ENCODE measurements at regions of chr12 and their contacts with region 1.

Region 1: GRCh38 chr12:114684098-114684869 is at the start of gene TBX3:
- DNase-seq: peak; percentile 98
- H3K4me3 ChIP-seq: peak within 1 kb of the TSS; percentile 93
- H3K27me3 ChIP-seq: no peaks in the 10 kb centered on the region
- CTCF ChIP-seq: peak; percentile 77
- polyA plus RNA-seq, gene TBX3: 66.4 and 75.7 TPM in 2 replicates

Region 2: GRCh38 chr12:114704096-114704495 is 19.8 kb after region 1 on chr12:
- CTCF ChIA-PET with region 1: interaction called, 5 read pairs
- POLR2A ChIA-PET with region 1: interaction called, 22 read pairs
- DNase-seq: no peak
- H3K4me3 ChIP-seq: no peak overlapping the region
- H3K27me3 ChIP-seq: no peaks in the 10 kb centered on the region
- CTCF ChIP-seq: no peak

Region 3: GRCh38 chr12:114783089-114783618 is 98.9 kb after region 1 on chr12:
- CTCF ChIA-PET with region 1: no interaction called
- POLR2A ChIA-PET with region 1: no interaction called
- DNase-seq: no peak
- H3K4me3 ChIP-seq: no peak overlapping the region
- H3K27me3 ChIP-seq: no peaks in the 10 kb centered on the region
- CTCF ChIP-seq: no peak

Region 4: DNA sequence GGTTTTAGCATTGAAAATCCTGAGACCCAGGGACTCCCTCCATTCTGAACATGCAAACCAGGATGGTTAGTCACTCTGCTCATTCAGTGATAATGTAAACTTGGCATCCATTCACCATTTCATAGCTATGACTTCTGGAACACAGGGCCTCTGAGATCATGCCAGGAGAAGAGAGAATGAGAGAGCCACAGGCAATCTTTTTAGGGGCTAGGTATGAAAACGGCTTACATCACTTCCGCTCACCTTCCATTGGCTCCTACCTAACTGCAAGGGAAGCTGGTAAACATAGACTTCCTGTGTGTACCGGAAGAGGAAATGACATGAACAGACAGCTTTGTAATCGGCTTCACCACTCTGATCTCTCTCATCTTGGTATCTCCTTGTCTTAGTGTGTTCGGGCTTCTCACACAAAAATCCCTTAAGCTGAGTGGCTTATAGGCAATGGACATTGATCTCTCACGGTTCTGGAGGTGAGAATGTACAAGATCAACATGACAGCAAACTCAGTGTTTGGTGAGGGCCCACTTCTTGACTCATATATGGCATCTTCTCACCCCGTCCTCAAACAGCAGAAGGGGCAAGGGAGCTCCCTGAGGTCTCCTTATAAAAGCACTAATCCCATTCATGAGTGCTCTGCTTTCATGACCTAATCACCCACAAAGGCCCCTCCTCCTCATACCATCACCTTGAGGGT is 465.5 kb after region 1 on chr12:
- CTCF ChIA-PET with region 1: interaction called, 10 read pairs
- POLR2A ChIA-PET with region 1: interaction called, 5 read pairs
- DNase-seq: peak; percentile 83
- H3K4me3 ChIP-seq: no peak overlapping the region
- H3K27me3 ChIP-seq: no peaks in the 10 kb centered on the region
- CTCF ChIP-seq: no peak

Region 5: GRCh38 chr12:115752913-115753726 is 1068.8 kb after region 1 on chr12:
- CTCF ChIA-PET with region 1: interaction called, 20 read pairs
- POLR2A ChIA-PET with region 1: interaction called, 7 read pairs
- DNase-seq: no peak
- H3K4me3 ChIP-seq: no peak overlapping the region
- H3K27me3 ChIP-seq: no peaks in the 10 kb centered on the region
- CTCF ChIP-seq: peak; percentile 70